Activated T-helper 1 cell treated with anti-CD3 and anti-CD28 coated beads, Interleukin-12 subunit alpha, Interleukin-12 subunit beta, Interleukin-2, Interleukin-4 antibody, amounts not matched to agents 30 ng/mL and 10 ng/mL and 1 ng/mL, durations not matched to agents 14 hours and 24 hours and 36 hours (primary cell): ENCODE measurements at regions of chr1 and their contacts with region 1.

Region 1: DNA sequence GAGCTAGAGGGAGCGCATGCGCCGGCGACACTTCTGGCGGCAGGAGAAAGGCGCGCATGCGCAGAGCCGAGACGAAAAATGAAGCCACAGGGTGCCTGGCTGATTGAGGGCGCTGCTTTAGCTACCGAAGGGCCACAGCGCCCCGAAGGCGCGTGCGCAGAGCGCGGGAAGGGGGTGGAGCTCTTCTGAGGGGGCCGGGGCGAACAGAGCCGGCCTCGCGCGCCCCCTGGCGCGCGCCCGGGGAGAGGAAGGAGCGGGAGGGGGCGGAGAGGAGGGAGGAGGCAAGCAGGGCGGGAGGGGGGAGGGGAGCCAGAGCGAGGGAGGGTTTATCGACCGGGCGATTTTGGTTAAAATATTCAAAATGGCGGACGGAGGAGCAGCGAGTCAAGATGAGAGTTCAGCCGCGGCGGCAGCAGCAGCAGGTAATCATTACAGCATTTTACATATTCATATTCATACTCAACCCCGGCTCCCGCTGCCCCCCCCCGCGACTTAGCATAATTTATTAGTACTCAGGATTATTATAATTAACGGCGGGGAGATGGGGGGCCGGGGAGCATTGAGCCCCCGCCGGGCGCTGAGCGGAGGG is at the start of gene POU2F1:
- DNase-seq: peak; percentile 98
- H3K4me3 Mint-ChIP-seq: peak within 1 kb of the TSS; percentile 93
- H3K27ac Mint-ChIP-seq: peak within 1 kb of the TSS; percentile 93
- H3K4me1 Mint-ChIP-seq: peaks cover 42% of the 10 kb centered on the region
- H3K27me3 Mint-ChIP-seq: peaks cover 4% of the 10 kb centered on the region
- total RNA-seq, gene POU2F1: 20.2 and 24.6 TPM in 2 replicates

Region 2: DNA sequence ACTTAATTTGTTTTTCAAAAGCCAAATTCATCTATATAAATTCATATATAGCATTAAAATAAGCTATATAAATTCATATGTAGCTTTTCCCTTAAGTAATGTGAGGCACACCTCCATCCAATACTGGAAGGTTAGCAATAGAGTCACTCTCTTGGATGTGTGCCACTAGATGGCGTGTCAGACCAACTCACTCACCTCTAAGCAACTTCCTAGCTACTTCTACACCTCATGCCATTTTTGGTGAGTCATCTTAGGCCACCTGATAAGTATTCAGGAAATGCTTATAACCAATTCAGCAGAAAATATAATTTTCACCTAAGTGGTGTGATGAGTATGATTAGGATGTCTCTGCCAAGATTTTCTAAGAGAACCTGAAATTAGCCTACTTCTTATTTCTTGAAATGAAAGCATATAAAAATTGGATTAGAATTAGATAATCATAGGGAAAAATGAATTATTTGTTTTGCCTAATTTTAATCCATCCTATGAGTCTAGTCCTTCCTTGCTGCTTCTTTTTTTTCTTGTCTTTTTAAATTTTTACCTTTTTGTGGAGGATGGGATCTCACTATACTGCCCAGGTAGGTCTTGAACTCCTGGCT is 310.1 kb before region 1 on chr1:
- intact Hi-C with region 1: loop called (anchors 2 kb)
- DNase-seq: peak; percentile 70
- H3K4me3 Mint-ChIP-seq: no peak overlapping the region
- H3K27ac Mint-ChIP-seq: no peak overlapping the region
- H3K4me1 Mint-ChIP-seq: peaks cover 28% of the 10 kb centered on the region
- H3K27me3 Mint-ChIP-seq: peaks cover 5% of the 10 kb centered on the region

Region 3: GRCh38 chr1:167121375-167122120 is 99.1 kb before region 1 on chr1:
- intact Hi-C with region 1: loop called (anchors 5 kb)
- DNase-seq: peak; percentile 13
- H3K4me3 Mint-ChIP-seq: peak overlapping the region; percentile 80
- H3K27ac Mint-ChIP-seq: no peak overlapping the region
- H3K4me1 Mint-ChIP-seq: peaks cover 6% of the 10 kb centered on the region
- H3K27me3 Mint-ChIP-seq: peaks cover 8% of the 10 kb centered on the region

Region 4: GRCh38 chr1:167409183-167409582 is 188.6 kb after region 1 on chr1:
- intact Hi-C with region 1: no loop called
- DNase-seq: no peak
- H3K4me3 Mint-ChIP-seq: no peak overlapping the region
- H3K27ac Mint-ChIP-seq: no peak overlapping the region
- H3K4me1 Mint-ChIP-seq: peaks cover 16% of the 10 kb centered on the region
- H3K27me3 Mint-ChIP-seq: no peaks in the 10 kb centered on the region

Region 5: DNA sequence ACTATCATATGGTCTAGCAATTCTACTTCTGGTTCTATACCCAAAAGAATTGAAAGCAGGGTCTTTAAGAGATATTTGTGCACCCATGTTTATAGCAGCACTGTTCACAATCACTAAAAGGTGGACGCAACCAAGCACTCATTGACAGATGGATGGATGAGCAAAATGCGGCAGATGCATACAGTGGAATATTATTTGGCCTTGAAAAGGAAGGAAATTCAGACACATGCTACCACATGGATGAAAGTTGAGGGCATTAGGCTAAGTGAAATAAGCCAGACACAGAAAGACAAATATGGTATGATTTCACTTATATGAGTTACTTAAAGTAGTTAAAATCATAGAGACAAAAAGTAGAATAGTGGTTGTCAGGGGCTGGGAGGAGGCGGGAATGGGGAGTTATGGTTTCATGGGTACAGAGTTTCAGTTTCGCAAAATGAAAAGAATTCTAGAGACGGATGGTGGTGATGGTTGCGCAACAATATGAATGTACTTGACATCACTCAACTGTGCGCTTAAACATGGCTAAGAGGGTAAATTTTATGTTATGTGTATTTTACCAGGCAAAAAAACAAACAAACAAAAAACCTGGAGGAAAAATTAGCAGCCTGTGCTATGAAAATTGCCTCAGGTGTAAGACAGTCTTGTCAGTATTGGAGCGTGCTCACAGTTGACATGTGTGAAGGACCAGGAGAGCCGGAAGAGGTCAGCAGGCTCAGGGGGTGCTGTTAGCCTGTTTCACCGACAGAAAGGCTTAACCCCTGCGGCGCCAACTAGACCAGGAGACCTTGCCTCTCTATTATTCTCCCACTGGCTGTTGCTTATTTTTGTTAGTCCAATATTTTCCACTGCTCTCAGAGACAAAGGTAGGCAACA is 271.2 kb after region 1 on chr1:
- intact Hi-C with region 1: loop called (anchors 2 kb)
- DNase-seq: no peak
- H3K4me3 Mint-ChIP-seq: peak overlapping the region; percentile 70
- H3K27ac Mint-ChIP-seq: peak overlapping the region; percentile 88
- H3K4me1 Mint-ChIP-seq: peaks cover 92% of the 10 kb centered on the region
- H3K27me3 Mint-ChIP-seq: no peaks in the 10 kb centered on the region

Region 6: GRCh38 chr1:167627865-167628641 is 407.4 kb after region 1 on chr1:
- intact Hi-C with region 1: loop called (anchors 1 kb)
- DNase-seq: peak; percentile 82
- H3K4me3 Mint-ChIP-seq: peak overlapping the region; percentile 85
- H3K27ac Mint-ChIP-seq: peak overlapping the region; percentile 89
- H3K4me1 Mint-ChIP-seq: peaks cover 70% of the 10 kb centered on the region
- H3K27me3 Mint-ChIP-seq: no peaks in the 10 kb centered on the region